ENCODE measurements at regions of chr9 and their contacts with region 1.

Region 1: DNA sequence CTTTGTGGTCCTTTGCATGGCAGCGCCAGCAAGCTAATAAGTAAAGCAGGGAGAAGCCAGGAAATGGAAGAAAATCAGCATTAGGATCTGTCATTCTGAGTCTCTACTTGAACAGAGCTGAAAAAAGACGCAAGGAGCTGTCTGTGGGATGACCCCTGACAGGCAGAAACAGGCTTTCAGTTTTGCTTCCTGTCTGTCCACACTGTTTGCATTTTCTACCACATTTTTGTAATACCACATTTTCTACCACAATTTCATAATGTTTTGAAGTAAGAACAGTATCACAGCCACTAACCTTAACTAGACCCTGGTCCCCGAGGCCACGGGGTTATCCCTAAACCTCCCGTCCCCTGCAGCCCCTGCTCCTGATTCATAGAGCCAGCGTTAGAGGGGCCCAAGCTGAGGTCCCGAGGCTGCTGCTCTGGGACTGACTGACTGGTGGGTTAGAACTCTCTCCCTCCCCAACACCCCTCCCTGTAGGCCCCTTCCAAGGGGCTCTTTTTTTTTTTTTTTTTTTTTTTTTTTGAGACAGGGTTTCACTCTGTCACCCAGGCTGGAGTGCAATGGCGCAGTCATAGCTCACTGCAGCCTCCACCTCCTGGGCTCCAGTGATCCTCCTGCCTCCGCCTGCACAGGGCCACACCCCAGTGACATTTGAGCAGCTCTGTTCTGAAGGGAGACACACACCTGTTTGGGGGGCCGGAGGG is 4.0 kb upstream of the CLIC3 start:
- DNase-seq: peak; percentile 52
- H3K4me3 ChIP-seq: no peak overlapping the region
- H3K27ac ChIP-seq: no peak overlapping the region
- H3K4me1 ChIP-seq: peaks cover 31% of the 10 kb centered on the region
- H3K27me3 ChIP-seq: no peaks in the 10 kb centered on the region
- CTCF ChIP-seq: no peak

Region 2: DNA sequence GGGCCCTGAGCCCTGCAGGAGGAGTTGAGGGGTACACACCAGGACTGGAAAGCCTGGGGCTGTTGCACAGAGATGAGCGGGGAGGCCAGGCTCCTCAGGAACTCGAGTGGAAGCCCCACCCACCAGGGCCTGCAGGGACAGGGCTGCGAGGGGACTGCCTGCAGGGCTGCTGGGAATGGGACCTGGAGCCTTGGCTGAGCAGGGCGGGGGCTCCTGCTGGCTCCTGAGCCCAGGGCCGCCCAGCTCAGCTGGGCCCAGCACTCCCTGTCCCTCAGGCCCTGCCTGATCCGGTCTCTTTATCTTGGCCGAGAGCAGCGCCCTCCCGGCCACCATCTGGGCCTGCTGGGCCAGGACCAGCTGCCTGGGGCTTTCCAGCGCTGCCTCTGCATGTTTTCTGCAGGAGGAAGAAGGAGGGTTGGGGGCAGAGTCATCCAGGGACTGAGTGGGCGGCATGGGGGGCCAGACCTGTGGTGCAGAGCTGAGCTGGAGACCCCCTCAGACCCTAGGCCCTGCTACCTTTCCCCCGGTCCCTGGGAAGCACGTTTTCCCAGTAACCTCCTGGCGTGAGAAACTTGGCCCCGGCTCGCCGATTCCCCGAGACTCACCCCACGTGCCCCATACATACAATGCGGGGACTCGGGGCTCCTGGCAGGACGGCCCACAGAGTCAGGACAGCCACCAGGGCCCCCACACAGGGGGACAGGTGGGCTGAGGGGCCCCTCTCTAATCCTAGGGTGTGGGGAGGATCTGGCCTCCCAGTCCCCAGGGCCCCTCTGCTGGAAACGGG is 38.9 kb before region 1 on chr9:
- CTCF ChIA-PET with region 1: no interaction called
- dilution Hi-C with region 1: no loop called
- in situ Hi-C with region 1: no loop called
- intact Hi-C with region 1: no loop called
- DNase-seq: no peak
- H3K4me3 ChIP-seq: no peak overlapping the region
- H3K27ac ChIP-seq: no peak overlapping the region
- H3K4me1 ChIP-seq: peaks cover 5% of the 10 kb centered on the region
- H3K27me3 ChIP-seq: no peaks in the 10 kb centered on the region
- CTCF ChIP-seq: no peak

Region 3: GRCh38 chr9:137034863-137035761 is 34.8 kb after region 1 on chr9:
- CTCF ChIA-PET with region 1: interaction called, 6 read pairs
- dilution Hi-C with region 1: no loop called
- in situ Hi-C with region 1: no loop called
- intact Hi-C with region 1: loop called (anchors 1 kb)
- DNase-seq: peak; percentile 68
- H3K4me3 ChIP-seq: no peak overlapping the region
- H3K27ac ChIP-seq: no peak overlapping the region
- H3K4me1 ChIP-seq: peaks cover 17% of the 10 kb centered on the region
- H3K27me3 ChIP-seq: no peaks in the 10 kb centered on the region
- CTCF ChIP-seq: peak; percentile 82 to 94

Region 4: DNA sequence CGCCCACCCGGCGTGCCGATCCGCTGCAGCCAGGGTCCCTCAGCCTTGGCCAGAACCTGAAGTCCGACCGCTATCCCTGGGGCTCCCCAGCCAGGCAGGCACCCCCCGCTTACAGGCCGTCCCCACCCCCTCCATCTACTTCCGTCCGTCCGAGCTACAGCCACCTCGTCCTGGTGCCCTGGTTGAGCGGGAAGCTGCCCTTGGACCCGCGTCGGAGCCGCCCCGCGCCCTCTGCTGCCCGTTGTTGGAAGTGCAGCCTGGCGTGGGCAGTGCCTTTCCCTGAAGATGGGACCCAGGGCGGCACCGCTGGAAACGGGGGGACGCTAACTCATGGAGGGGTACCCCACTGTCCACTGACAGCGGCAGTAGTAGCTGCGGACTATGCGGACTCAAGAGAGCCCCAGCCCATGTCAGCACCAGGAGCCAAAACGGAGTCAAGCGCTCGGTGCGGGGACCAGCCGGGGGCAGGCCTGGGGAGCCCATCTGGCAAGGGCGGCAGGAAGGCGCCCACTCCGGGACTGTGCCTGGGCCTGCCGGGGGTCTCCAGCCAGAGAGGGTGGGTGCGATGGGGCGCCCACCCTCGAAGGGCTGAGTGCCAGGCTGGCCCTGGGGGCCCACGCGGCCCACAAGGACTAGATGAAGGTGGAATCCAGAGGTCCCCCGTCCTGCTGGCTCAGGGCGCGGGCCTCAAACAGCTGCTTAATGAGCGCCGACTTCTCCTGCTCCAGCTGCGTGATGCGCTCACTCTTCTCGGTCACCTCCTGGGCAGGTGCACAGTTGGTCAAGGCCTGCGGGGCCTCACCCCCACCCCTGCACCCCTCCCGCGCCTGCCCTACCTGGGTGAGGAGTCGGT is 63.9 kb after region 1 on chr9:
- CTCF ChIA-PET with region 1: no interaction called
- dilution Hi-C with region 1: no loop called
- in situ Hi-C with region 1: no loop called
- intact Hi-C with region 1: no loop called
- DNase-seq: no peak
- H3K4me3 ChIP-seq: no peak overlapping the region
- H3K27ac ChIP-seq: no peak overlapping the region
- H3K4me1 ChIP-seq: peaks cover 42% of the 10 kb centered on the region
- H3K27me3 ChIP-seq: no peaks in the 10 kb centered on the region
- CTCF ChIP-seq: peak; percentile 87 to 94

Measured in mammary epithelial cell (primary cell).